H1 (cell line): ENCODE measurements at regions of chr19 and their contacts with region 1.

Region 1: DNA sequence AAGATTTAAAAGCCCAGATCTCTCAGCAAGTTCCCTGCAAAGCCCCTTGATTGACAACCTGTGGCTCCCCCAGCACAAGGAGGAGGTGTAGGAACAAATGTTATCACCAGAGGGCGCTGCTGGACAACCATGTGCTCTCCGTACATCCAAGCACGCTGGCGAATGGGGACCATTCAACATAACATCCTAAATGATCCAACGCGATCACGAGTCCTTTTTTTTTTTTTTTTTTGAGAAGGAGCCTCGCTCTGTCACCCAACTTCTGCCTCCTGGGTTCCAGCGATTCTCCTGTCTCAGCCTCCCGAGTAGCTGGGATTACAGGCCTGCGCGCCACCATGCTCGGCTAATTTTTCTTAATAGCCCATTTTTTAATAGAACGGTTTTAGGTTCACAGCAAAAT is 52.0 kb downstream of the NWD1 start:
- DNase-seq: peak; percentile 79 to 94
- H3K4me3 ChIP-seq: no peak overlapping the region
- H3K27ac ChIP-seq: no peak overlapping the region
- H3K4me1 ChIP-seq: no peaks in the 10 kb centered on the region; a peak in 1 of 7 replicates
- H3K27me3 ChIP-seq: peaks cover 0 to 2% (median 0%) of the 10 kb centered on the region in 4 experiments; a peak in 1 of 7 replicates
- CTCF ChIP-seq: peak; percentile 75 to 89 (median 77)
- EP300 ChIP-seq: no peak
- POLR2A ChIP-seq: no peak
- RAD21 ChIP-seq: peak; percentile 87 to 93

Region 2: GRCh38 chr19:16615808-16616207 is 155.8 kb before region 1 on chr19:
- CTCF ChIA-PET with region 1: no interaction called
- POLR2A ChIA-PET with region 1: no interaction called
- DNase-seq: no peak
- H3K4me3 ChIP-seq: no peak overlapping the region
- H3K27ac ChIP-seq: no peak overlapping the region
- H3K4me1 ChIP-seq: peaks cover 0 to 7% (median 3%) of the 10 kb centered on the region in 4 experiments; a peak in 4 of 7 replicates
- H3K27me3 ChIP-seq: no peaks in the 10 kb centered on the region
- CTCF ChIP-seq: no peak
- EP300 ChIP-seq: no peak
- POLR2A ChIP-seq: no peak
- RAD21 ChIP-seq: no peak

Region 3: DNA sequence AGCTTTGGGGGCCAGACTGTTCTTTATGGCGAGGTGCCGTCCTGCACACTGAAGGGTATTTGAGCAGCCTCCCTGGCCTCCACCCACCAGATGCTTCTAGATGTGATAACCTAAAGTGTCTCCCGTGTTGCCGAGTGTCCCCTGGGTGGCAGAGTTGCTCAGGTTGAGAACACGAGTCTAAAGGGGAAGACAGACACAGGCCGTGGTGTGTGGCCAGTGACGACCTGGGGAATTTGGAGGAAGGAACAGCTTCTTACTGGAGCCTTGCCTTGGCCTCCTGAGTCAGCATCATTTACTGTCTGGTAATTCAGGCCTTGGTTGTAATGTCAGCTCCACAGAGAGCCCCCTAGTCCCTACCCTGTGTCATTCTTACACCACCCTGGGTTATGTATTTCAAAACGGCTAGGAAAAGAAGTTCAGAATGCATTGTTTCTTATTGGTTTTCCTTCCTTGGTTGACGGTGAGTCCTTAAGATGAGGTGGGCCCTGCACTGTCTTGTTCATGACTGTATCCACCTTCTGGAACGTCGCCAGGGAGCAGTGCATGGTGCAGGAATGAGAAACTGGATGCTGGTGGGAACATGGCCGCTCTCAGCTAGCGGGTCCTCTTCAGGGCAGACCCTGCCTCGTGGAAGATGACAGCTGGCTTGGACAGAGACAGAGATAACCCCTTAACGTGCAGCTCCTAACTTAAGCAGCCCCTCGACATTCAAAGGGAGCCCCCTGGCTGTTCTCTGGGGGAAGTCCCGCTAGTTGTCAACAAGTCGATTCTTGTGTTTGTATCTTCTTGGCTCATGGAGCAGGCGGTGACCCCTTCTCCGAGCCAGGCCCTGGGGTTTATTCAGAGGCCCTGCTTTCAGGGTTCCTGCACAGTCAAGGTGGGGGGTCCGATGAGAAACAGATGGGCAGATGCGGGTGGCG is 64.8 kb after region 1 on chr19:
- CTCF ChIA-PET with region 1: interaction called, 16 read pairs
- POLR2A ChIA-PET with region 1: no interaction called
- DNase-seq: no peak
- H3K4me3 ChIP-seq: no peak overlapping the region
- H3K27ac ChIP-seq: no peak overlapping the region
- H3K4me1 ChIP-seq: no peaks in the 10 kb centered on the region
- H3K27me3 ChIP-seq: no peaks in the 10 kb centered on the region
- CTCF ChIP-seq: peak; percentile 38 to 58 (median 44)
- EP300 ChIP-seq: no peak
- POLR2A ChIP-seq: no peak
- RAD21 ChIP-seq: peak; percentile 62 to 75